ENCODE measurements at regions of chr7 and their contacts with region 1.

Region 1: DNA sequence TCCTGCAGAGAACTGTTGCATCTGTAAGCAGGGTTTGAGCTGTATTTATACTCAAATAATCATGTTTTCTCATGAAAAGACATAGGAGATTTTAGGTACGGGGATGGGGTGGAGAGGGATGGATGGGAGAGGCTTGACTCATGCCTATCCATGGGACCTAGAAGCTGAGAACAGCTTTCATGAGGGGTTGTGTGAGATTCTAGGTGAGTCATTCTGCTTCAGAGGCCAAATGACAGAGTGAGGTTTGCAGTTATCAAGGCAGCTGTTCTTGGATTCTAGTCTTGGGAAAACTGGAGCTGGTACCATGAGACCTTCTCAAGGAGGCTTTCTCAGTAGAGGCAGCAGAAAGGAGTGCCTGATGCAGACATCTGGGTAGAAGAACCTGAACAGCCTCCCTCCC is 746.9 kb downstream of the TYW1 start:
- DNase-seq: no peak

Region 2: DNA sequence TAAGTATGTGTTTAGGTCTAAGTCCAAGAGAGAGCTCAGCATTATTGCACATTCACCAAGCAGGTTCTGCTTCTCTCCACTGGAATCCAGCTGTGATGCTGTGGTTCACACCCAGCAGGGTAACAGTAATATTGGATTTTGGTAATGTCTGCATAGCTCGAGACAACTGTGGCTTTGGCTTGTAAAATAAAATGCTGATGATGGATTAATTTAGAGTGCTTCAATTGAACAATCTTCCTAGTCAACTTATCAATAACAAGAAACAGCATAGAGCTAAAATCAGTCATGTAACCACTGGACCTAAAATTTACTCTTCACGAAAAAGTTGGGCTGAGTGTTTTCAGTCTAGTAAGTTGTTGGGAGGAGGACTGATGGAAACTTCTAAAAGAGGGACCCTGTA is 37.7 kb before region 1 on chr7:
- intact Hi-C with region 1: no loop called
- DNase-seq: no peak

Region 3: GRCh38 chr7:67753891-67754290 is 10.4 kb after region 1 on chr7:
- intact Hi-C with region 1: no loop called
- DNase-seq: no peak

Region 4: DNA sequence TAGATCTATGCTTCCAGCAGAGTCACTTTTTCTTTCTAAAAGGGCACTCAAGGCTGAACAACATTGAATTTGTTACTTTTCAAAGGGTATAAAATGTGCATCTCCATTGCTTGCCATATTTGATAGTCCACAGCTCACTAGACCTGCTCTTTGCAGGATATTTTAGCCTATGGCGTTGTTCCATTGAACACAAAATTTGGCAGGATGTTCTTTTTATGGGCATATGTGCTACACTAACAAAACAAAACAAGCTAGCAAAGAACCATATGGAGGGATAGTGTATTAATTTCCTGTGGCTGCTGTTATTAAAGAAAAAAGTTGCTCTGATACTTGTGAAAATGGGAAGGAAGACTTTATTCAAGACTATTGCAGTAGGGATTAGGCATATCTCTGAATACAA is 81.9 kb after region 1 on chr7:
- intact Hi-C with region 1: loop called in 1 of 2 experiments (anchors 2 kb)
- DNase-seq: no peak